CD8-positive, alpha-beta T cell (primary cell): ENCODE measurements at regions of chr6 and their contacts with region 1.

Region 1: GRCh38 chr6:142207265-142207877 is 60.3 kb downstream of the VTA1 start:
- DNase-seq: peak; percentile 6 to 65 (median 49)
- ATAC-seq: peak; percentile 63
- H3K4me3 ChIP-seq: no peak overlapping the region
- H3K4me3 Mint-ChIP-seq: no peak overlapping the region
- H3K27ac ChIP-seq: no peak overlapping the region
- H3K27ac Mint-ChIP-seq: peak overlapping the region; percentile 42
- H3K4me1 ChIP-seq: no peaks in the 10 kb centered on the region
- H3K4me1 Mint-ChIP-seq: no peaks in the 10 kb centered on the region
- H3K27me3 ChIP-seq: no peaks in the 10 kb centered on the region
- H3K27me3 Mint-ChIP-seq: no peaks in the 10 kb centered on the region
- CTCF ChIP-seq: peak; percentile 92

Region 2: GRCh38 chr6:141677598-141678211 is 529.7 kb before region 1 on chr6:
- CTCF ChIA-PET with region 1: no interaction called
- POLR2A ChIA-PET with region 1: no interaction called
- intact Hi-C with region 1: loop called (anchors 5 kb)
- DNase-seq: peak in 2 of 9 experiments; percentile 35 to 48
- ATAC-seq: peak; percentile 40
- H3K4me3 ChIP-seq: no peak overlapping the region
- H3K4me3 Mint-ChIP-seq: no peak overlapping the region
- H3K27ac ChIP-seq: no peak overlapping the region
- H3K27ac Mint-ChIP-seq: no peak overlapping the region
- H3K4me1 ChIP-seq: no peaks in the 10 kb centered on the region
- H3K4me1 Mint-ChIP-seq: no peaks in the 10 kb centered on the region
- H3K27me3 ChIP-seq: no peaks in the 10 kb centered on the region
- H3K27me3 Mint-ChIP-seq: peaks cover 2% of the 10 kb centered on the region
- CTCF ChIP-seq: peak; percentile 54

Region 3: GRCh38 chr6:141988954-141989705 is 218.2 kb before region 1 on chr6:
- CTCF ChIA-PET with region 1: interaction called, 5 read pairs
- POLR2A ChIA-PET with region 1: no interaction called
- intact Hi-C with region 1: loop called (anchors 2 kb)
- DNase-seq: peak in 2 of 9 experiments; percentile 39 to 48
- ATAC-seq: no peak
- H3K4me3 ChIP-seq: no peak overlapping the region
- H3K4me3 Mint-ChIP-seq: no peak overlapping the region
- H3K27ac ChIP-seq: no peak overlapping the region
- H3K27ac Mint-ChIP-seq: no peak overlapping the region
- H3K4me1 ChIP-seq: no peaks in the 10 kb centered on the region
- H3K4me1 Mint-ChIP-seq: no peaks in the 10 kb centered on the region
- H3K27me3 ChIP-seq: no peaks in the 10 kb centered on the region
- H3K27me3 Mint-ChIP-seq: peaks cover 4% of the 10 kb centered on the region
- CTCF ChIP-seq: peak; percentile 43

Region 4: DNA sequence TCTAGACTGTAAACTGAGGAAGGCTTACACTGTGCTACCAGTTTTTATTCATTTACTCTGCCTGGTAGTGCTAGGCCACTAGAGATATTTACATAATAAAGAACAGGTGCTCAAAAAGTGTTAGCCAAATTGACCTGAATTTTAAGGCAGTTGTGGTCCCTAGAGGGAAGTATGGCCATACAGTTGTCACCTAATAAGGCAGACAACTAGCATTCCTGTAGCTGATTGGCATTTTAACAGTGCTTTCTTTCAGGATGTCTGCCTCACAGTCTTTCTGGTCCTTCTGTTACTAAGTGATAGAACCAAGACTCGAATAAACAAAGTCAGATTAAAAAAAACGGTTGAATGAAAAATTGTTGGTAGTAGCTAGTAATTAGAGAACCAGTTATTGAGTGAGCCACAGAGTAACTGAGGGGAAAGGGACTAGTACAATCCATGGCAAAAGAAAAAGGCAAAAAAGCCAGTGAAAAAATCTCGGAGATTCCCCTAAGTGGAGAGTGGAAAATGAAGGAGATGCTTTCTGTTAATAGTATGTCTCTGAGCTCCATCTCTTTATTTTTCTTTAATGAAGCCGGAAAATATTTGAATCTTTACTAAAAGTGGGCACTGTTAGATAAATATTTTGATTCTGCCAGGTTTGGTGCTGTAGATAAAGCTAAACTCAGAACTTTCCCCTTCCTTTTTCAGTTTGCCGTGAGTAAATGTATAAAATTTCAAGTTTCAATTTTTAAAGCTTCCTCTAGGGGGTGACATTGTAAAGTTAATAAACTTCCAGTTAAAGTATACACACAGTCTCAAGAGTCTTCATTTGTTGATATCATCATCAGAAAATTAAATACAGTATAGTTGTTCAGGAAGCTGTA is 51.2 kb before region 1 on chr6:
- CTCF ChIA-PET with region 1: interaction called, 14 read pairs
- POLR2A ChIA-PET with region 1: no interaction called
- intact Hi-C with region 1: no loop called
- DNase-seq: peak in 2 of 9 experiments; percentile 19 to 44
- ATAC-seq: peak; percentile 76
- H3K4me3 ChIP-seq: no peak overlapping the region
- H3K4me3 Mint-ChIP-seq: no peak overlapping the region
- H3K27ac ChIP-seq: no peak overlapping the region
- H3K27ac Mint-ChIP-seq: peak overlapping the region; percentile 39
- H3K4me1 ChIP-seq: peaks cover 8% of the 10 kb centered on the region
- H3K4me1 Mint-ChIP-seq: peaks cover 69% of the 10 kb centered on the region
- H3K27me3 ChIP-seq: no peaks in the 10 kb centered on the region
- H3K27me3 Mint-ChIP-seq: no peaks in the 10 kb centered on the region
- CTCF ChIP-seq: peak; percentile 83

Region 5: DNA sequence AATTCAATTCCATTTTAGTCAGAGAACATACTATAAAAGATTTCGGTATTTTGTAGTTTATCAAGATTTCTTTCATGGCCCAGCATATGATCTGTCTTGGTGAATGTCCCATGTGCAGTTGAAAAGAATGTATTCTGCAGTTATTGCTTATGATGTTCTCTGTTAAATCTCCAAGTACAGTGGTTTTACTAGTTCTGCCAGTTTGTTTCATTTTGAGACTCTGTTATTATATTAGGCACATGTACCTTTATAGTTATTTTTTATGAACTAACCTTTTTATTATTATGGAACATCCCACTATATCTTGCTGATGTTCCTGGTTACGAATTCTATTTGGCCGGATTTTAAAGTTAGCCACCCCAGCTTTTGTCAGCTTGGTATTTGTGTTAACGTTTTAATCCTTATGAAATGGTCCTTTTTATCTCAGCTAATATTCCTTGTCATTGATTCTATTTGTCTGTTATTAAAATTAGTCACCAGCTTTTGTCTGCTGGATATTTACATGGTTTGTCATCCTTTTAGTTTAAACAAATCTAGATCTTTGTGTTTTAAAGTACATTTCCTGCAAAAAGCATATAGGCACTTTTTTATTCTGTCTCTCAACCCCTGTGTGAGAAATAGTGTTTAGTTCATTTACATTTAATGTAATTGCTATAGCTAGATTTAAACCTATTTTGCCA is 11.4 kb before region 1 on chr6:
- CTCF ChIA-PET with region 1: interaction called, 14 read pairs
- POLR2A ChIA-PET with region 1: no interaction called
- intact Hi-C with region 1: no loop called
- DNase-seq: no peak
- ATAC-seq: no peak
- H3K4me3 ChIP-seq: no peak overlapping the region
- H3K4me3 Mint-ChIP-seq: no peak overlapping the region
- H3K27ac ChIP-seq: no peak overlapping the region
- H3K27ac Mint-ChIP-seq: peak overlapping the region; percentile 41
- H3K4me1 ChIP-seq: peaks cover 8% of the 10 kb centered on the region
- H3K4me1 Mint-ChIP-seq: peaks cover 52% of the 10 kb centered on the region
- H3K27me3 ChIP-seq: no peaks in the 10 kb centered on the region
- H3K27me3 Mint-ChIP-seq: no peaks in the 10 kb centered on the region
- CTCF ChIP-seq: no peak

Region 6: GRCh38 chr6:142222022-142222421 is 14.7 kb after region 1 on chr6:
- CTCF ChIA-PET with region 1: interaction called, 10 read pairs
- POLR2A ChIA-PET with region 1: no interaction called
- intact Hi-C with region 1: no loop called
- DNase-seq: no peak
- ATAC-seq: no peak
- H3K4me3 ChIP-seq: no peak overlapping the region
- H3K4me3 Mint-ChIP-seq: no peak overlapping the region
- H3K27ac ChIP-seq: no peak overlapping the region
- H3K27ac Mint-ChIP-seq: no peak overlapping the region
- H3K4me1 ChIP-seq: no peaks in the 10 kb centered on the region
- H3K4me1 Mint-ChIP-seq: no peaks in the 10 kb centered on the region
- H3K27me3 ChIP-seq: no peaks in the 10 kb centered on the region
- H3K27me3 Mint-ChIP-seq: no peaks in the 10 kb centered on the region
- CTCF ChIP-seq: no peak